Ovary (tissue), 10 donors: ENCODE measurements at regions of chr18 and their contacts with region 1.

Region 1: DNA sequence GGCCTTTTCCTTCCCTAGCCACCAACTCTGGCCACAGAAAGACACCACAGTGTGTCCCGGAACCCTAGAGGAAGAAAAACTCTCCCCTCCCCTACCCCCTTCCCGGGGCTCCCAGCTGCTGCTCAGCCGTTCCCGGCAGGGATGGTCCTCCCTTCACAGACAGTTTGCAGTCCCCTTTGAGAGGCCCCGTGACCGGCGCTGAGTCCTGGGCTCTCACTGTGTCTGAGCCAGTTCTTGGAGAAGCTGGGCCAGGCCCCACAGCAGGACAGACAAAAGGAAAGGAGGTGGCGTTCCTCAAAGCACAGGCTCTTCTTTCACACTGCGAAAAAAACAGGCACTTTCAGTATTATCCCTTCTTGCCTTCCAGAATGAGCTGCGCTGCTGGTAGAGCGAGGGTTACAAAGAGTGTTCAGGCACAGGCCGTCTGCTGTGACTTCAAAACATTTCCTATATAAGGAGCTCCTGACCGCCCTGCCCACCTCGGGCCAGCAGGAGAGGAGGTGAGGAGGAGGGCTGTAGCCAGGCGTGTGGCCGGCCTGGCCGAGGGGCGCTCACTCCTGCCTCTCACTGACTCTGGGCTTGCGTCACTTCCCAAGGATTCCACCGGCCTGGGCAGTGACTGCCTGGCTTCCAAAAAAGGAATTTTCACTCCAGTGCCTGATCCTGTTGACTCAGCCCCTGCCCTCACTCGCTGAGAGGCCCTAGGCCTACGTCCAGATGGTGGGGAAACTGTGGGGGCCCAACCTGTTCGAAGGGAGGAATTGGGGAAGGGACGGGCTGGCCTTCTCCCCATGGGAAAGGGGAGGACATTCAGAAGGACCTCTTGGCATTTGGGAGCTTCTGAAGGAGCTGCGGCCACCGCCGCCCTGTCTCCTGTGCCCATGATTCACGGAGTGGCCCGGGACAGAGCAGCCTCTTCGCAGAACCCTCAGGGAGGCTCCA is 24.9 kb downstream of the CIDEA start:
- DNase-seq: peak; percentile 86 to 92 (median 90)
- H3K4me3 ChIP-seq: peak overlapping the region; percentile 53
- H3K27ac ChIP-seq: peak overlapping the region; percentile 92 to 97
- H3K4me1 ChIP-seq: peaks cover 16% of the 10 kb centered on the region
- H3K27me3 ChIP-seq: no peaks in the 10 kb centered on the region
- CTCF ChIP-seq: peak; percentile 14 to 49 (median 37)
- EP300 ChIP-seq: no peak
- POLR2A ChIP-seq: peak; percentile 81

Region 2: GRCh38 chr18:12308386-12309100 is 29.5 kb after region 1 on chr18:
- intact Hi-C with region 1: loop called in 1 of 4 experiments (anchors 2 kb)
- DNase-seq: peak; percentile 89 to 94 (median 91)
- H3K4me3 ChIP-seq: peak overlapping the region; percentile 90
- H3K27ac ChIP-seq: peak overlapping the region; percentile 94 to 100
- H3K4me1 ChIP-seq: peaks cover 1% of the 10 kb centered on the region
- H3K27me3 ChIP-seq: no peaks in the 10 kb centered on the region
- CTCF ChIP-seq: no peak
- EP300 ChIP-seq: no peak
- POLR2A ChIP-seq: peak; percentile 70